ENCODE measurements at regions of chr22 and their contacts with region 1.

Region 1: GRCh38 chr22:35930933-35931332 is 97.7 kb downstream of the RBFOX2 start:
- DNase-seq: peak in 1 of 3 donors; percentile 37
- ATAC-seq: peak; percentile 77
- H3K4me3 ChIP-seq: no peak overlapping the region
- H3K4me1 ChIP-seq: no peaks in the 10 kb centered on the region
- CTCF ChIP-seq: no peak

Region 2: GRCh38 chr22:36053271-36054051 is 122.5 kb after region 1 on chr22:
- intact Hi-C with region 1: no loop called
- DNase-seq: no peak
- ATAC-seq: no peak
- H3K4me3 ChIP-seq: no peak overlapping the region
- H3K4me1 ChIP-seq: no peaks in the 10 kb centered on the region
- CTCF ChIP-seq: no peak

Region 3: GRCh38 chr22:36065775-36066559 is 135.0 kb after region 1 on chr22:
- intact Hi-C with region 1: loop called in 1 of 2 experiments (anchors 10 kb)
- DNase-seq: peak; percentile 85 to 87 (median 87)
- ATAC-seq: peak; percentile 98
- H3K4me3 ChIP-seq: no peak overlapping the region
- H3K4me1 ChIP-seq: peaks cover 14% of the 10 kb centered on the region
- CTCF ChIP-seq: peak; percentile 97